CD8-positive, alpha-beta T cell (primary cell): ENCODE measurements at regions of chr1 and their contacts with region 1.

Region 1: DNA sequence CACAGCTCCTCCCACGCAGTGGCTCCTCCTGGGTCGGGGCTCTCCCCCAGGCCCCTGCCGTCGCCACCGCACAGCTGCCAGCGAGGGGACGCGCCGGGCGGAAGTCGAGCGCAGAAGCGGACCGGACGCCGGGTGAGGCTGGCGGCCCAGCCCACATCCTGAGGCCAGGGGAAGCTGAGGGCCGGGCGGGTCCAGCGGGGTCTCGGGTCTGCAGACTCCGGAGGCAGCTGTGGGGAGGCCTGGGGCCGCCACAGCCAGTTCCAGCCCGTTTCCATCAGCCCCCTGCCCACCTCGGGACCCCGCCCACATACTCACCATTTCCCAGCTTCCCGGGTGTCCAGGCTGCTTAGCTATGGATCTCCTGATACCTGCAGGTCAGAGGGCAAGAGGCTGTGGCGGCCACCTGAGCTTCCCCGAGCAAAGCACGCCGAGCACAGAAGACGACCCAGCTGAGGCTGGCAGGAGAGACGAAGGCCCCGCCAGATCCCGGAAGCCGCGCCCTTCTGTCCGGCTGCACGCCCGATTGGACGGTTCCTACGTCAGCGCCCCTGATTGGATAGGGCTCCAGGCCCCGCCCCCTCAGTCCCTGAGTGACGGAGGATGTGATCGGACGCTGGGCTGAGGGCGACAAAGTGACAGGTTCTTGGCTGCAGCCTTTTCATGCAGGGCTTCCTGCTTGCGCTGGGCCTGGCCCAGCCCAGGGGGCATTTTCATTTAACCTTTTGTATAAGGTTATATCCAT is 38.7 kb upstream of the ZNF124 start:
- DNase-seq: peak; percentile 89 to 97 (median 94)
- ATAC-seq: peak; percentile 99
- H3K4me3 ChIP-seq: peak overlapping the region; percentile 82 to 94
- H3K4me3 Mint-ChIP-seq: peak overlapping the region; percentile 94
- H3K27ac ChIP-seq: peak overlapping the region; percentile 84 to 94
- H3K27ac Mint-ChIP-seq: peak overlapping the region; percentile 94
- H3K4me1 ChIP-seq: peaks cover 30% of the 10 kb centered on the region
- H3K4me1 Mint-ChIP-seq: peaks cover 66% of the 10 kb centered on the region
- H3K27me3 ChIP-seq: no peaks in the 10 kb centered on the region
- H3K27me3 Mint-ChIP-seq: no peaks in the 10 kb centered on the region
- CTCF ChIP-seq: no peak

Region 2: DNA sequence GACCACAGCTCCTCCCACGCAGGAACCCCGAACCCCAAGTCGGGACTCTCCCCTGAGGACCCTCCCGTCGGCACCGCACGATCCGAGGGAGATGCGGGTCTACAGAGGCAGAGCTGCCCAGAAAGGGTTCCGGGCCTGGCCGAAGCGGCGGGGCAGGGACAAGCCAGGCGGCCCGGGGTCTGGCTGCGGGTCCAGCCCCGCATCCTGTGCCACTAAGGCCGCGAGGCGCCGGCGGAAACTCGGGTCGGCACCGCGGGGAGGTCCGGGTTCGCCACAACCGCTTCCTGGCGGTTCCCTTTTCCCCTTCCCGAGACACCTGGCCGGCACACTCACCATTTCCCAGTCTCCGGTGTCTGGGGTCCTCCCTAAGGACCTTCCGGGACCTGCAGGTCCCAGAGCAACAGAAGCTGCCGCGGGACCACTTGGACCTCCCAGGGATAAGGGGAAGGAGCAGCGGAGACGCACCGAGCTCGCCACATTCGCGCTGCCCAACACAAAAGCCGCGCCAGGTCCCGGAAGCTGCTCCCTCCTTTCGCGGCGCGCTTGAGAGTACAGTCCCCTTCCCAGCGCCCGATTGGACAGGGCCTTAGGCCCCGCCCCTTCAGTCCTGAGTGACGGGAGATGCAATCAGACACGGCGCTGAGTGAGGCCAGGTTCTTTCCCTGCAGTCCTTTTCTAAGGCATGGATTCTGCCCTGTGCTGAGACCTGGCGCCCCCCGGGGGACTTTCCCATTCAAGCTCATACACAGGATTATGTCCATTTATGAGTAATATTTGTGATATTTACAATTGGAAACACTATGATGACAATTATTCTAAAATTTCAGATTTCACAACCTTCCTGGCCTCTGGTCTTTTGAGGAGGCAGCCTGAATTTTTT is 132.0 kb before region 1 on chr1 and contains the start of gene ZNF670:
- CTCF ChIA-PET with region 1: no interaction called
- POLR2A ChIA-PET with region 1: interaction called, 5 read pairs
- intact Hi-C with region 1: loop called in 1 of 2 experiments (anchors 2 kb)
- DNase-seq: peak; percentile 57 to 91 (median 82)
- ATAC-seq: peak; percentile 99
- H3K4me3 ChIP-seq: peak within 1 kb of the TSS; percentile 80 to 95
- H3K4me3 Mint-ChIP-seq: peak within 1 kb of the TSS; percentile 89
- H3K27ac ChIP-seq: peak within 1 kb of the TSS; percentile 37 to 51
- H3K27ac Mint-ChIP-seq: peak within 1 kb of the TSS; percentile 78
- H3K4me1 ChIP-seq: peaks cover 7% of the 10 kb centered on the region
- H3K4me1 Mint-ChIP-seq: peaks cover 34% of the 10 kb centered on the region
- H3K27me3 ChIP-seq: no peaks in the 10 kb centered on the region
- H3K27me3 Mint-ChIP-seq: no peaks in the 10 kb centered on the region
- CTCF ChIP-seq: no peak
- total RNA-seq, gene ZNF670: 0.17 TPM in 1 of 2 experiments, not detected in the other

Region 3: GRCh38 chr1:247172996-247173395 is 37.6 kb before region 1 on chr1:
- CTCF ChIA-PET with region 1: no interaction called
- POLR2A ChIA-PET with region 1: interaction called, 3 read pairs
- intact Hi-C with region 1: loop called (anchors 2 kb)
- DNase-seq: peak in 1 of 9 experiments; percentile 11
- ATAC-seq: no peak
- H3K4me3 ChIP-seq: no peak overlapping the region
- H3K4me3 Mint-ChIP-seq: no peak overlapping the region
- H3K27ac ChIP-seq: no peak overlapping the region
- H3K27ac Mint-ChIP-seq: no peak overlapping the region
- H3K4me1 ChIP-seq: no peaks in the 10 kb centered on the region
- H3K4me1 Mint-ChIP-seq: peaks cover 19% of the 10 kb centered on the region
- H3K27me3 ChIP-seq: no peaks in the 10 kb centered on the region
- H3K27me3 Mint-ChIP-seq: no peaks in the 10 kb centered on the region
- CTCF ChIP-seq: no peak

Region 4: GRCh38 chr1:247281001-247281574 is 70.5 kb after region 1 on chr1:
- CTCF ChIA-PET with region 1: no interaction called
- POLR2A ChIA-PET with region 1: no interaction called
- intact Hi-C with region 1: no loop called
- DNase-seq: no peak
- ATAC-seq: no peak
- H3K4me3 ChIP-seq: no peak overlapping the region
- H3K4me3 Mint-ChIP-seq: no peak overlapping the region
- H3K27ac ChIP-seq: no peak overlapping the region
- H3K27ac Mint-ChIP-seq: no peak overlapping the region
- H3K4me1 ChIP-seq: no peaks in the 10 kb centered on the region
- H3K4me1 Mint-ChIP-seq: no peaks in the 10 kb centered on the region
- H3K27me3 ChIP-seq: no peaks in the 10 kb centered on the region
- H3K27me3 Mint-ChIP-seq: no peaks in the 10 kb centered on the region
- CTCF ChIP-seq: no peak

Region 5: DNA sequence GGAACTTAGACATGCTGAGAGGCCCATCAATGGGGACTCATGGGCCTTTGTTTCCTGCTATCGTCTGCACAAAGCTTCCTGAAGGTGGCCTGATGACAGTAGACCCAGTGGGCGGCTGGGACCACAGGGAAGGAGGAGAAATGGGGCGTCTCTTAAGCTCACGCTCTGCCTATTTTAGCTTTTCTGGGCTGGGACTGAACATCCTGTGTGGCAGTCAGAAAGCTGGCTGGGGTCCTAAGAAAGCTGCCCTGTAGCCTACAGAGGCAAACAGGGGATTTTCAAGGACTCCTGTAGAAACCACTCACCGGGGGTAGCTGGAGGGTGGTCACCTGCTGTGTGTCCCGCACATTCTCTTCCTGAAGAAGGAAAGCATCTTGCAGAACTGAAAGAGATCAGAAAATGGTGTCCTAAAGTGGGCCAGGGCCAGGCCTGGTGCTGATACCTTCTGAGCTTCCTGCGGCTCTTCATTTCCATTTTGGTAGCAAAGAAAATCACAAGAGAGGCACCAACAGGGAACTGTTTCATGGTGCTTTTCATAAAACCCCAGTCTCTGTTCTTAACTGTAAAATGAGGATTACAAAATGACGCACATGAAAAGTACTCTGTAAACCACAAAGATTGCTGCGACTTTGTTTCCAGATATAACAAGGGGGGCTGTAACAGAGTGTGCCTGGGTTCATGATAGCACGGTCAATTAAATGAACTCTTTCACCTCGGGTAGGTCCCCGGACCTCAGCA is 112.5 kb after region 1 on chr1:
- CTCF ChIA-PET with region 1: no interaction called
- POLR2A ChIA-PET with region 1: interaction called, 5 read pairs
- intact Hi-C with region 1: loop called in 1 of 2 experiments (anchors 1 kb)
- DNase-seq: peak in 5 of 9 experiments; percentile 12 to 73 (median 26)
- ATAC-seq: peak; percentile 66
- H3K4me3 ChIP-seq: peak overlapping the region; percentile 20 to 50
- H3K4me3 Mint-ChIP-seq: peak overlapping the region; percentile 86
- H3K27ac ChIP-seq: peak overlapping the region; percentile 73 to 78
- H3K27ac Mint-ChIP-seq: peak overlapping the region; percentile 97
- H3K4me1 ChIP-seq: peaks cover 73% of the 10 kb centered on the region
- H3K4me1 Mint-ChIP-seq: peaks cover 87% of the 10 kb centered on the region
- H3K27me3 ChIP-seq: no peaks in the 10 kb centered on the region
- H3K27me3 Mint-ChIP-seq: no peaks in the 10 kb centered on the region
- CTCF ChIP-seq: no peak